Natural killer cell (primary cell): ENCODE measurements at regions of chr11 and their contacts with region 1.

Region 1: DNA sequence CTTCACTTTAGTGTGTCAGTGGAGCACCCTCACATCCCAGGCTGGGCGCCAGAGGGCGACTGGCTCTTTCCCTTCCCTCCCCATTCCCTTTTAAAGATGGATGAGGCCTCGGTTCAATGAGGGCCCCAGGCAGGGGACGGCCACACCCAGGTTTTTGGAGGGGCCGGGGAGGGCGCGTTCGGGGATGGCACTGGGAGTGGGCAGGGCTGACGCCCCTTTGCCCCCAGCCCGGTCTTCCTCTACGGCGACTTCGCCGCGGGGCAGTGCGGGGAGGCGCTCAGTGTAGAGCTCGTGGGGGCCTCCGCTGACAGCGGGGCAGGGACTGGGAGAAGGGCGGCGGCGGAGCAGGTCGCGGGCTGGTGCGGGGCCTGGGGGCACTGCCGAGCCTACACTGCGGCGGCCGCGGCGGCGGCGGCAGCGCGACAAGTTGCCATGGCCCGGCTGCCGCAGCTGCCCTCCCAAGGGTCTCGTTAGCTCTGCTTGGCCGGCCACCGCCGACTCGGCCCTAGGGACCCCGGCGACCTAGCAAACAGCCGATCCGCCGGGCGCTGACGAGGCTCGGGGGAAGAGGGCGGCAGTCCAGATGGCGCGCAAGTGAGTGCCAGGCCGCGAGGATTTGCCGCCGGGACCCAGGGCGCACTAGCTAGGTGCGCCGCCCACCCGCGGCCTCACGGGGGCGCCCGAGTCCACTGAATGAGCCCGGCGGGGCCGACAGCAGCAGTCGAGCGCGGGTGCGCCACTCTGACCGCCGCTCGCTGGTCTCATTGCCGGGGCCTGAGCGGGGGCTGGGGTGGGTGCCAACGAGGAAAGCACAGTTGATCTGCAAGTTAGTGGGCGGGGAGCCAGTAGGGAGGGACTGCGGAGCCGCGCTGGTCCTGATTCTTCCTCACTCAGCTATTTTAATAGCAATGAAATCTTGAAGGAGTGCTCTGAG is 92.7 kb downstream of the RRM1 start:
- DNase-seq: peak; percentile 83 to 87
- ATAC-seq: peak; percentile 94 to 95 (median 95)
- H3K4me3 ChIP-seq: peak overlapping the region; percentile 15
- H3K4me3 Mint-ChIP-seq: peak overlapping the region; percentile 67
- H3K27ac ChIP-seq: no peak overlapping the region
- H3K27ac Mint-ChIP-seq: no peak overlapping the region
- H3K4me1 ChIP-seq: peaks cover 5% of the 10 kb centered on the region
- H3K4me1 Mint-ChIP-seq: peaks cover 14 to 17% of the 10 kb centered on the region in 2 donors
- H3K27me3 ChIP-seq: peaks cover 2% of the 10 kb centered on the region
- H3K27me3 Mint-ChIP-seq: peaks cover 2 to 9% of the 10 kb centered on the region in 2 donors
- CTCF ChIP-seq: peak; percentile 99

Region 2: DNA sequence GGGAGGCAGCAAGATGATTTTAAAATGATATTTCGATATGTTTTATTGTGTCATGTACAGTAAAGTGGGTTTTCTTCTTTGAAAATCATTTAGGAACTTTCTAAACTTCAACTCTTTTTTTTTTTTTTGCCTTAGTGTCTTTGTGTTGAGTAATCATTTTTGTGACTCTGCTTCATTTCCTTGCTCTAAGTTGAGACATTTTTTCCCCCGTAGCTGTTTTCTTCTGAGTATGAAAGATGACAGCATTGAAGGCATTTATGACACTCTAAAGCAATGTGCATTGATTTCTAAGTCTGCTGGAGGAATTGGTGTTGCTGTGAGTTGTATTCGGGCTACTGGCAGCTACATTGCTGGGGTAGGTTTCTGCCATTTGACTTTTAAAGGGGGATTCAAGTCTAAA is 69.2 kb before region 1 on chr11:
- intact Hi-C with region 1: no loop called
- DNase-seq: no peak
- ATAC-seq: no peak
- H3K4me3 ChIP-seq: no peak overlapping the region
- H3K4me3 Mint-ChIP-seq: no peak overlapping the region
- H3K27ac ChIP-seq: no peak overlapping the region
- H3K27ac Mint-ChIP-seq: no peak overlapping the region
- H3K4me1 ChIP-seq: no peaks in the 10 kb centered on the region
- H3K4me1 Mint-ChIP-seq: peaks cover 0 to 4% of the 10 kb centered on the region in 2 donors
- H3K27me3 ChIP-seq: no peaks in the 10 kb centered on the region
- H3K27me3 Mint-ChIP-seq: no peaks in the 10 kb centered on the region
- CTCF ChIP-seq: no peak

Region 3: GRCh38 chr11:4493480-4493818 is 306.1 kb after region 1 on chr11:
- intact Hi-C with region 1: loop called (anchors 1 kb)
- DNase-seq: no peak
- ATAC-seq: no peak
- H3K4me3 ChIP-seq: no peak overlapping the region
- H3K4me3 Mint-ChIP-seq: no peak overlapping the region
- H3K27ac ChIP-seq: no peak overlapping the region
- H3K27ac Mint-ChIP-seq: no peak overlapping the region
- H3K4me1 ChIP-seq: no peaks in the 10 kb centered on the region
- H3K4me1 Mint-ChIP-seq: no peaks in the 10 kb centered on the region
- H3K27me3 ChIP-seq: no peaks in the 10 kb centered on the region
- H3K27me3 Mint-ChIP-seq: peaks cover 19 to 58% of the 10 kb centered on the region in 2 donors
- CTCF ChIP-seq: peak; percentile 57

Region 4: GRCh38 chr11:4523666-4524065 is 336.3 kb after region 1 on chr11:
- intact Hi-C with region 1: no loop called
- DNase-seq: no peak
- ATAC-seq: no peak
- H3K4me3 ChIP-seq: no peak overlapping the region
- H3K4me3 Mint-ChIP-seq: no peak overlapping the region
- H3K27ac ChIP-seq: no peak overlapping the region
- H3K27ac Mint-ChIP-seq: no peak overlapping the region
- H3K4me1 ChIP-seq: no peaks in the 10 kb centered on the region
- H3K4me1 Mint-ChIP-seq: no peaks in the 10 kb centered on the region
- H3K27me3 ChIP-seq: no peaks in the 10 kb centered on the region
- H3K27me3 Mint-ChIP-seq: peaks cover 29 to 68% of the 10 kb centered on the region in 2 donors
- CTCF ChIP-seq: no peak

Region 5: GRCh38 chr11:4539603-4540219 is 352.4 kb after region 1 on chr11:
- intact Hi-C with region 1: loop called (anchors 1 kb)
- DNase-seq: peak; percentile 27 to 65
- ATAC-seq: peak; percentile 38 to 75 (median 71)
- H3K4me3 ChIP-seq: no peak overlapping the region
- H3K4me3 Mint-ChIP-seq: no peak overlapping the region
- H3K27ac ChIP-seq: no peak overlapping the region
- H3K27ac Mint-ChIP-seq: no peak overlapping the region
- H3K4me1 ChIP-seq: no peaks in the 10 kb centered on the region
- H3K4me1 Mint-ChIP-seq: no peaks in the 10 kb centered on the region
- H3K27me3 ChIP-seq: no peaks in the 10 kb centered on the region
- H3K27me3 Mint-ChIP-seq: peaks cover 4 to 21% of the 10 kb centered on the region in 2 donors
- CTCF ChIP-seq: peak; percentile 68